ENCODE measurements at regions of chr12 and their contacts with region 1.

Region 1: DNA sequence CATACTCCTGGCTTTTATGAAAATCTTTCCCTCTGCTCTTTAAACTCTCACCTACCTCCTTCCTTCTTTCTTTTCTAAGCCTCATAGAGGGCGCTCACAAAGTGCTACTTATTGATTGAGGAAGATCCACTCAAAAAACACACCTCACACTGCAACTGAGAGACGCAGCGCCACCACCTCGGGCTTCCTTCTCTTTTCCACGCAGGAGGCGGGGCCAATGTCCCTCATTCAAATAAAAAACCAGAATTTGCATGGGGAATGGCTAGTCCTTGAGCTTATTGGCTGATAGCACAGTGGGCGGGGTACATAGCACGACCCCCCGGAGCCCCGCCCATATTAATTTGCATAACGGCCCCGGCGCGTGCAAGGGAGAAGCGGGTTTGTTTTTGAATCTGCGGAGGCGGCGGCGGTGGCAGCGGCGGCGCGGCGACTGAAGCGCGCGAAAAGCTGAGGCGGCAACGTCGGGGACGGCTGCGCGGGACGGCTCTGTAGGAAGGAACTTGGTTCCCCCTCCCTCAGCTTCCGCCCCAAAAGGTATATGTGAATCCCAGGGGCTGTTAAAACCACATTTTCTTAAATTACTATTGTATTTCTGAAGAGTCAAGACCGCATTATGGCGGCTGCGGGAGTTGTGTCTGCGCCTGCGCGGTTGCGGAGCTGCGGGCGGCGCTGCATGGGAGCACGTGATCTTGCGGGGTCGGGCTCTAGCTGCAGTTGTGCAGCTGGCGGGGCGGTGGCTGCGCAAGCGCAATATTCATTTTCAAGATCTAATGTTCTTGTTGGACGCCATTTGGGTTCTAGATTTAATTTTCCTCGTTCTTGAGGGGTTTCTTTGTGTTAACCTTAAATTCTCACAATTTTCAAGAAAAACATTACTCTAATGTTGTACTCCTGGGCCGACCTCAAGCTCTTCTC is at the start of gene ATF7IP:
- DNase-seq: peak; percentile 89
- ATAC-seq: peak; percentile 83
- H3K4me3 Mint-ChIP-seq: peak within 1 kb of the TSS; percentile 87
- H3K27ac Mint-ChIP-seq: peak within 1 kb of the TSS; percentile 97
- H3K4me1 Mint-ChIP-seq: peaks cover 64% of the 10 kb centered on the region
- H3K27me3 Mint-ChIP-seq: no peaks in the 10 kb centered on the region
- CTCF ChIP-seq: no peak
- total RNA-seq, gene ATF7IP: 142 and 153 TPM in 2 replicates

Region 2: GRCh38 chr12:12716793-12717585 is 1648.6 kb before region 1 on chr12 and contains the start of gene CDKN1B:
- CTCF ChIA-PET with region 1: no interaction called
- POLR2A ChIA-PET with region 1: no interaction called
- intact Hi-C with region 1: loop called (anchors 5 kb)
- DNase-seq: peak; percentile 75
- ATAC-seq: peak; percentile 70
- H3K4me3 Mint-ChIP-seq: peak within 1 kb of the TSS; percentile 98
- H3K27ac Mint-ChIP-seq: peak within 1 kb of the TSS; percentile 97
- H3K4me1 Mint-ChIP-seq: peaks cover 67% of the 10 kb centered on the region
- H3K27me3 Mint-ChIP-seq: no peaks in the 10 kb centered on the region
- CTCF ChIP-seq: no peak
- total RNA-seq, gene CDKN1B: 56.6 and 59.0 TPM in 2 replicates

Region 3: DNA sequence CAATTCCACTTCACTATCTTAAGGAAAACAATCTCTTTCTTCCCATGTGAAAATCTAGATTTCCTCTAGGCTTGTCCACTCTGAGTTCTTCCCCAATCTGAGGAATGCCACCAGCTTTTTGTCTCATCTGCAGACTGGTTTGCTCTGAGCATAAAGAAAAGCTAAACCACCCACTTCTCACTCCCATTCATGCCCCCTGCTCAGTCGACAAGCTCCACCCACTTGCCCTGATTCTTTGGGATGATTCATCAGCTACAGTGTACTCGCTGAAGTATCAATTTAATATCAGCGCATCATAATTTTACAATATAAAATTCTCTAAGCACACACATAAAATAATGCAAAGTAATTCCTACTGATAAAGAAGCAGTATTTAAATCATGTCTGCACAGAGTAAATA is 593.3 kb before region 1 on chr12:
- CTCF ChIA-PET with region 1: no interaction called
- POLR2A ChIA-PET with region 1: no interaction called
- intact Hi-C with region 1: no loop called
- DNase-seq: no peak
- ATAC-seq: no peak
- H3K4me3 Mint-ChIP-seq: no peak overlapping the region
- H3K27ac Mint-ChIP-seq: no peak overlapping the region
- H3K4me1 Mint-ChIP-seq: no peaks in the 10 kb centered on the region
- H3K27me3 Mint-ChIP-seq: peaks cover 6% of the 10 kb centered on the region
- CTCF ChIP-seq: no peak

Region 4: DNA sequence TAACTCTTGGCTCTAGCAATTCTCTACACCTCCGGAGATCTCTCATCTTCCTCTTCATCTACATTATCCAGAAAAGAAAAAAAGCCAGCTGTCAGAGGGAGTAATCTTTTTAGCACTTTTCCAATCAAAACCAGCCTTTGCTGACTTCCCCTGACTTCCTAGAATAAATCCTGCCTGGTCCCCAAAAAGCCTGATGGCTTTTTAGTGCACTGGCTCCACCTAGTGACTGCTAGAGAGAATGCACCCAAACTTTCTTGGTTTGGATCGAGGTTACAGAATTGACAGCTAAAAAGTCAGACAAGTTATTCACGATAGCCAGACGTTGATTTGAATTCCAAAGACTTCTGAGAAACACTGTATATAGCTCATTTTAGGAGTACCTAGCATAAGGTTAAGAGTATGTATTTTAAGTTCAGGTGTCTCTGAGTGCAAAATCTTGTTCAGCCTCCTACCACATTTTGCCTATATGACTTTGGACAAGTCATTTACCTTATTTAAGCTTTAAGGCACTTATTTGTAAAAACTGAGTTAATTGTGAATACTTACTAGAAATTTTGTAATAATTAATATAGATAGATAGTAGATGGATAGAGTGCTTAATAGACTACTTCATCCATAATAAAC is 198.4 kb before region 1 on chr12:
- CTCF ChIA-PET with region 1: interaction called, 4 read pairs
- POLR2A ChIA-PET with region 1: interaction called, 17 read pairs
- intact Hi-C with region 1: no loop called
- DNase-seq: no peak
- ATAC-seq: peak; percentile 66
- H3K4me3 Mint-ChIP-seq: no peak overlapping the region
- H3K27ac Mint-ChIP-seq: no peak overlapping the region
- H3K4me1 Mint-ChIP-seq: peaks cover 30% of the 10 kb centered on the region
- H3K27me3 Mint-ChIP-seq: no peaks in the 10 kb centered on the region
- CTCF ChIP-seq: peak; percentile 75

Region 5: DNA sequence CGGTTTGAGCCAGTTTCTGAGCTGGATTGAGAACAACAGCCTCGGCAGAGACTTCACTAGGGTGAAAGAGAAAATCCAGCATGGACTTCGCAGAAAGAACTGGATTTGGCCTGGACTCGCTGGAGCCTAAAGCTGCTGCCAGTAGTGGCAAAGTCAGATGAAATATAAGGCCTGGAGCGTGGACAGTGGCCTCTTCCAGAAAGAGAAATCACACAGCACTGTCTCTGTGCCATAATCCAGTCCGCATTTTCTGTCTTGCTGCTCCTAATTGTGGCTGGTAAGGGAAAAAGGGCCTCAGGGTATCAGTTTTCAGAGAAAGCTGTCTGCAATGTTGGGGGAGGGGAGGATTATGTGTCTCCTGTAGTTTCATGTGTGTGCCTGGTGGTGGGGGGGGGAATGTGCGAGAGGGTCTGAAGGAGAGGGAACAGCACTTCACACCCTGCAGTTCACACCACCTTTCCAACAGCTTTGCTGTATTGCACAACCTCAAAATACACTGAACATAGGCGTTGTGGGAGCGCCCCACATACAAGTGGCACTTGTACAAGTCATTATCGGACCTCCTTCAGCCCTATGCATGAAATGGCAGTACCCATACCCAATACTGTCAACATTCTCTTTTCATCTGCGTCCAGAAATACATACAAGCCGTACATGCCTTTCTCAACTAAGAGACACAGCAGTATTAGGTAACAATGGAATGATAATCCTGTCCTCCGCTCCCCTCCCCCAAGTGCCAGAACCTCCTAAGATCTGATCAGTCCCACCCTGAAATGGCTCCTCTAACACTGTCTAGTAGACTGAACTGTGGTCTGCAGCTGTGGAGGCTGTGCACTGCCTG is 107.6 kb before region 1 on chr12:
- CTCF ChIA-PET with region 1: interaction called, 15 read pairs
- POLR2A ChIA-PET with region 1: interaction called, 79 read pairs
- intact Hi-C with region 1: loop called (anchors 1 kb)
- DNase-seq: no peak
- ATAC-seq: peak; percentile 68
- H3K4me3 Mint-ChIP-seq: peak overlapping the region; percentile 75
- H3K27ac Mint-ChIP-seq: peak overlapping the region; percentile 98
- H3K4me1 Mint-ChIP-seq: peaks cover 70% of the 10 kb centered on the region
- H3K27me3 Mint-ChIP-seq: no peaks in the 10 kb centered on the region
- CTCF ChIP-seq: no peak

Region 6: GRCh38 chr12:14307004-14307403 is 58.5 kb before region 1 on chr12:
- CTCF ChIA-PET with region 1: no interaction called
- POLR2A ChIA-PET with region 1: interaction called, 14 read pairs
- intact Hi-C with region 1: no loop called
- DNase-seq: no peak
- ATAC-seq: peak; percentile 47
- H3K4me3 Mint-ChIP-seq: peak overlapping the region; percentile 44
- H3K27ac Mint-ChIP-seq: peak overlapping the region; percentile 86
- H3K4me1 Mint-ChIP-seq: peaks cover 37% of the 10 kb centered on the region
- H3K27me3 Mint-ChIP-seq: no peaks in the 10 kb centered on the region
- CTCF ChIP-seq: no peak

Region 7: GRCh38 chr12:14454098-14454907 is 88.8 kb after region 1 on chr12:
- CTCF ChIA-PET with region 1: interaction called, 16 read pairs
- POLR2A ChIA-PET with region 1: interaction called, 22 read pairs
- intact Hi-C with region 1: loop called (anchors 1 kb)
- DNase-seq: no peak
- ATAC-seq: peak; percentile 97
- H3K4me3 Mint-ChIP-seq: no peak overlapping the region
- H3K27ac Mint-ChIP-seq: peak overlapping the region; percentile 74
- H3K4me1 Mint-ChIP-seq: peaks cover 41% of the 10 kb centered on the region
- H3K27me3 Mint-ChIP-seq: no peaks in the 10 kb centered on the region
- CTCF ChIP-seq: no peak

Region 8: GRCh38 chr12:15546102-15546701 is 1180.7 kb after region 1 on chr12:
- CTCF ChIA-PET with region 1: no interaction called
- POLR2A ChIA-PET with region 1: no interaction called
- intact Hi-C with region 1: loop called (anchors 5 kb)
- DNase-seq: no peak
- ATAC-seq: peak; percentile 76
- H3K4me3 Mint-ChIP-seq: peak overlapping the region; percentile 87
- H3K27ac Mint-ChIP-seq: peak overlapping the region; percentile 99
- H3K4me1 Mint-ChIP-seq: peaks cover 60% of the 10 kb centered on the region
- H3K27me3 Mint-ChIP-seq: no peaks in the 10 kb centered on the region
- CTCF ChIP-seq: no peak